Caco-2 (cell line): ENCODE measurements at regions of chr15 and their contacts with region 1.

Region 1: GRCh38 chr15:79596051-79596507 is 163.9 kb downstream of the MINAR1 start:
- DNase-seq: peak; percentile 83 to 85
- H3K4me3 ChIP-seq: no peak overlapping the region
- H3K4me3 Mint-ChIP-seq: peak overlapping the region; percentile 46
- H3K27ac Mint-ChIP-seq: no peak overlapping the region
- H3K4me1 ChIP-seq: no peaks in the 10 kb centered on the region
- H3K4me1 Mint-ChIP-seq: no peaks in the 10 kb centered on the region
- H3K27me3 ChIP-seq: no peaks in the 10 kb centered on the region
- H3K27me3 Mint-ChIP-seq: peaks cover 27% of the 10 kb centered on the region
- CTCF ChIP-seq: peak; percentile 93 to 96

Region 2: GRCh38 chr15:79339564-79340314 is 256.3 kb before region 1 on chr15:
- CTCF ChIA-PET with region 1: interaction called, 31 read pairs
- POLR2A ChIA-PET with region 1: no interaction called
- intact Hi-C with region 1: loop called (anchors 1 kb)
- DNase-seq: peak in 1 of 2 experiments; percentile 41
- H3K4me3 ChIP-seq: no peak overlapping the region
- H3K4me3 Mint-ChIP-seq: no peak overlapping the region
- H3K27ac Mint-ChIP-seq: no peak overlapping the region
- H3K4me1 ChIP-seq: no peaks in the 10 kb centered on the region
- H3K4me1 Mint-ChIP-seq: no peaks in the 10 kb centered on the region
- H3K27me3 ChIP-seq: no peaks in the 10 kb centered on the region
- H3K27me3 Mint-ChIP-seq: no peaks in the 10 kb centered on the region
- CTCF ChIP-seq: peak; percentile 66 to 78

Region 3: DNA sequence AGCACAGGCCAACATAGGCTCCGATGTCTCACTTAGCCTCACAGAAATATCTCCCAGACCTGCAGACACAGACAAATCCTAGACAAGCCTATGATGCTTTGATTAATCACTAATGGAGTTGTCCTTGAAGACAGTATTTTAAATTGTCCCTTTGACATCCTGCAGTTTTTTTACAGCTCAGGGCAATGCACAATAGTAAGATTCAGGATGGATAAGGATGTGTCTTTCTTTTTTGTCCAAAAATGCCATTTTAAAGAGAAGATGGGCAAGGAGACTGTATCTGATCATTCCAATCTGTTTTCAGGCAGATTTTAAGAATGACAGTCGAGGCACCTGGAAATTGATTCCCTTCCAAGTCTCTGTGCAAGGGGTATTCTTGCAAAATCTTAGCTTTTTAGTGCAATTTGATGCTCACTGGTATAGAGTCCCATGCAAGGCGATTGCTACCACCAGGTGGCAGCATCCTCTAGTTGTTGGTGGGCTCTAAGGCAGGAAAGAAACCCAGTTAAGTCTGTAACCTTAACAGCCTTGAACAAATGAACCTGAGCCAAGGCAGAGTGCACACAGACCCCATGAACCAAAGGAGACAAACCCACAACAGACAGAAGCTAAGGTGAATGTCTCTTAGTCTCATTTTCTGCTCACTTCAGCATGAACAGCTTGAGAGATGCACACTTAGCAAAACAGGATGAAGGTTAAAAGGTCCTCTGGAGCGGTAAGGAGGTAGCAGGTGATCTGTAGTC is 215.2 kb before region 1 on chr15:
- CTCF ChIA-PET with region 1: interaction called, 80 read pairs
- POLR2A ChIA-PET with region 1: no interaction called
- intact Hi-C with region 1: loop called (anchors 1 kb)
- DNase-seq: peak; percentile 68 to 78
- H3K4me3 ChIP-seq: no peak overlapping the region
- H3K4me3 Mint-ChIP-seq: no peak overlapping the region
- H3K27ac Mint-ChIP-seq: no peak overlapping the region
- H3K4me1 ChIP-seq: no peaks in the 10 kb centered on the region
- H3K4me1 Mint-ChIP-seq: no peaks in the 10 kb centered on the region
- H3K27me3 ChIP-seq: no peaks in the 10 kb centered on the region
- H3K27me3 Mint-ChIP-seq: no peaks in the 10 kb centered on the region
- CTCF ChIP-seq: peak; percentile 65 to 76

Region 4: DNA sequence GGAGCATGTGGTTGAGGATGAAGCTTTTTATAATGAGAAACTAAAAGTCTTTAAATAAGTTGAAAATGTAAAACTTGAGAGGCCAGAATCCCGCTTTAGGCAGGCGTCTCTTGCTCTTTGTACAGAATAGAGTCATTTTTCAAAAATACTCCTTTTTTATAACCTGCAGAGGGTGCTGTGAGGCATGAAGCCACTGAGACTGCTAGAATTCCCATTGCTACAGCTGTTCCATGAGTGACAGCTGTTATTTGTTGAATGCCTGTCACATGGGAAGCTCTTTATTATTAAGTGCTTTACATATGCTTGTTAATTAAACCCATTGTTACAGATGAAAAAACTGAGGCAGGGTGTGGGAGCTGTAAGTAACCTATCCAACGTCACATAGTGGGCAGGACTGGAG is 145.4 kb before region 1 on chr15:
- CTCF ChIA-PET with region 1: interaction called, 6 read pairs
- POLR2A ChIA-PET with region 1: no interaction called
- intact Hi-C with region 1: loop called (anchors 1 kb)
- DNase-seq: no peak
- H3K4me3 ChIP-seq: no peak overlapping the region
- H3K4me3 Mint-ChIP-seq: no peak overlapping the region
- H3K27ac Mint-ChIP-seq: no peak overlapping the region
- H3K4me1 ChIP-seq: no peaks in the 10 kb centered on the region
- H3K4me1 Mint-ChIP-seq: no peaks in the 10 kb centered on the region
- H3K27me3 ChIP-seq: no peaks in the 10 kb centered on the region
- H3K27me3 Mint-ChIP-seq: no peaks in the 10 kb centered on the region
- CTCF ChIP-seq: peak in 1 of 2 experiments; percentile 13

Region 5: DNA sequence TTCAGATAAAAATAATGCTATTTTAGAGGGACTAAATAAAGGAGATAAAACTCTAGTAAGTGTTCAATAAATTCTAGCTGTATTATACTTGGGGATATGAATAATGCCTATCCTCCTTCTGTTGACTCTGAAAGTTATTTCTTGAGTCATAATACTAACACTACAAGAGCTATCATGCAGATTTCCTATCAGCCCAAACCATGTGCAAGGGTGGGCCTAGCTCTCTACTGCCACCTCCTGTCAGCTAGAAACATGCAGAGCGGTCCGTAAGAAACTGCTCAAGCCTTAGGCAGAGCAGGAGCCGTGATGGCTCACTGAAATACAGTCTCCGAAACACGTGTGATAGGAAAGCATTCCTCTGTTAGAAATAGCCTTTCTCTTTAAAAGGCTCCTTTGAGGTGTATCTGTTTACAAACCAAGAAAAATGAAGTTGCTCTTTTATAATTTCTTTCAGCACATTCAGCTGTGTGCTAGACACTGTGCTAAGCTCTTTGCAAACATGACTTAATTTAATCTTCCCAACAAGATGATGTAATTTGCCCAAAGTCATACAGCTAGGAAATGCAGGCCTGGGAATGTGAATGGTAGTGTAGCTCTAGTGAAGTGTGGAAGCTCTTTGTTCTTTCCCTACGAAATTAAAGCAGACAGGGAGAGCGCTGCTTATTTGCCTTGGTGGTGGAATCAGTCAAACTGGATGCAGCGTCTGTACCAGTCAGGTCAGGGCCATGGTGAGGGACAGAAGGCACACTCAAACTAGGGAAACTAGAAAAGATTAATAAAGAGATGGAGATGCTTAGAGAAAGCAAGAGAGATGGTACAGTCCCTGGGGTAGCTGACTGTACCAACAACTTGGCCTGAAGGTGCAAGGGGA is 257.6 kb after region 1 on chr15:
- CTCF ChIA-PET with region 1: interaction called, 24 read pairs
- POLR2A ChIA-PET with region 1: no interaction called
- intact Hi-C with region 1: no loop called
- DNase-seq: peak; percentile 61 to 76
- H3K4me3 ChIP-seq: no peak overlapping the region
- H3K4me3 Mint-ChIP-seq: no peak overlapping the region
- H3K27ac Mint-ChIP-seq: peak overlapping the region; percentile 18
- H3K4me1 ChIP-seq: 0 out of 2 replicates have a peak, but pooled peaks cover 3% of the 10 kb centered on the region
- H3K4me1 Mint-ChIP-seq: peaks cover 21% of the 10 kb centered on the region
- H3K27me3 ChIP-seq: no peaks in the 10 kb centered on the region
- H3K27me3 Mint-ChIP-seq: no peaks in the 10 kb centered on the region
- CTCF ChIP-seq: peak; percentile 84 to 95